ENCODE measurements at regions of chr6 and their contacts with region 1.

Region 1: DNA sequence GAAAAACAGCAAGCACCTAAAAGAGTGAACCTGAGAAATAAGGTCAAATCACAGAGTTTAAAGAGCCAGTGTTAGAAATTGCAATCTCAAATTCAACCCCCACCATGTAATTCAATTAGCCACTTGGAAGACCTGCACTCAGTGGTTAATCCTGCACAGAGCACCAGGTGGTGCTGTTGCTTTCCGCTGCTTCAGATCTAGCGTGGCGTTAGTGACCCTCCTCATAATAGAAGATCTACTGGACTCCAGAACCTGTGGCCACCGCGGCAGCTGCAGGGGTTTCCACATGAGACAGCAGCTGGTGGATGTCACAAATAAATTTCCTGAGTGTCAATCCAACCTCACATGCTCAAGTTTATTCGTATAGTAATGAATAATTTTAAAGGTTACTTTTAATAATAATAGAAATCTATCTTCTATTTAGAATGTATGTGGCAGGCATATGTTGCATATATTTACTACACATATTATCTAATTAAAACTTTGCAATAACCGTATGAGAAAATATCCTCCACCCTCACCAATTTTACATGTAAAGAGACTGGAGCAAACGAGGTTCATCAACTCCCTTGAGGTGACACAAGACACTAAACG is 84.4 kb downstream of the SYNE1 start:
- DNase-seq: peak; percentile 88
- H3K4me3 ChIP-seq: no peak overlapping the region
- H3K27ac ChIP-seq: no peak overlapping the region
- H3K4me1 ChIP-seq: no peaks in the 10 kb centered on the region
- H3K27me3 ChIP-seq: no peaks in the 10 kb centered on the region
- CTCF ChIP-seq: peak; percentile 78 to 83
- POLR2A ChIP-seq: no peak

Region 2: GRCh38 chr6:152484806-152485205 is 67.9 kb before region 1 on chr6:
- CTCF ChIA-PET with region 1: interaction called, 11 read pairs
- POLR2A ChIA-PET with region 1: no interaction called
- dilution Hi-C with region 1: no loop called
- intact Hi-C with region 1: loop called (anchors 1 kb)
- DNase-seq: peak; percentile 92
- H3K4me3 ChIP-seq: no peak overlapping the region
- H3K27ac ChIP-seq: no peak overlapping the region
- H3K4me1 ChIP-seq: peaks cover 14% of the 10 kb centered on the region
- H3K27me3 ChIP-seq: no peaks in the 10 kb centered on the region
- CTCF ChIP-seq: no peak
- POLR2A ChIP-seq: no peak

Region 3: GRCh38 chr6:152642989-152643388 is 90.3 kb after region 1 on chr6:
- CTCF ChIA-PET with region 1: interaction called, 18 read pairs
- POLR2A ChIA-PET with region 1: no interaction called
- dilution Hi-C with region 1: no loop called
- intact Hi-C with region 1: loop called (anchors 1 kb)
- DNase-seq: peak; percentile 59
- H3K4me3 ChIP-seq: no peak overlapping the region
- H3K27ac ChIP-seq: no peak overlapping the region
- H3K4me1 ChIP-seq: no peaks in the 10 kb centered on the region
- H3K27me3 ChIP-seq: peaks cover 0 to under 1% of the 10 kb centered on the region in 2 experiments
- CTCF ChIP-seq: peak; percentile 32 to 71
- POLR2A ChIP-seq: no peak

Region 4: GRCh38 chr6:152701081-152701862 is 148.6 kb after region 1 on chr6:
- CTCF ChIA-PET with region 1: interaction called, 13 read pairs
- POLR2A ChIA-PET with region 1: interaction called, 3 read pairs
- dilution Hi-C with region 1: no loop called
- intact Hi-C with region 1: loop called (anchors 1 kb)
- DNase-seq: peak; percentile 59
- H3K4me3 ChIP-seq: peak overlapping the region; percentile 57 to 97 (median 88)
- H3K27ac ChIP-seq: peak overlapping the region; percentile 92
- H3K4me1 ChIP-seq: peaks cover 42% of the 10 kb centered on the region
- H3K27me3 ChIP-seq: no peaks in the 10 kb centered on the region
- CTCF ChIP-seq: peak in 1 of 2 donors; percentile 3
- POLR2A ChIP-seq: no peak

Region 5: GRCh38 chr6:152863618-152864326 is 311.1 kb after region 1 on chr6:
- CTCF ChIA-PET with region 1: no interaction called
- POLR2A ChIA-PET with region 1: no interaction called
- dilution Hi-C with region 1: no loop called
- intact Hi-C with region 1: loop called (anchors 5 kb)
- DNase-seq: peak; percentile 78
- H3K4me3 ChIP-seq: no peak overlapping the region
- H3K27ac ChIP-seq: no peak overlapping the region
- H3K4me1 ChIP-seq: no peaks in the 10 kb centered on the region
- H3K27me3 ChIP-seq: no peaks in the 10 kb centered on the region
- CTCF ChIP-seq: peak; percentile 48 to 54
- POLR2A ChIP-seq: no peak

Region 6: DNA sequence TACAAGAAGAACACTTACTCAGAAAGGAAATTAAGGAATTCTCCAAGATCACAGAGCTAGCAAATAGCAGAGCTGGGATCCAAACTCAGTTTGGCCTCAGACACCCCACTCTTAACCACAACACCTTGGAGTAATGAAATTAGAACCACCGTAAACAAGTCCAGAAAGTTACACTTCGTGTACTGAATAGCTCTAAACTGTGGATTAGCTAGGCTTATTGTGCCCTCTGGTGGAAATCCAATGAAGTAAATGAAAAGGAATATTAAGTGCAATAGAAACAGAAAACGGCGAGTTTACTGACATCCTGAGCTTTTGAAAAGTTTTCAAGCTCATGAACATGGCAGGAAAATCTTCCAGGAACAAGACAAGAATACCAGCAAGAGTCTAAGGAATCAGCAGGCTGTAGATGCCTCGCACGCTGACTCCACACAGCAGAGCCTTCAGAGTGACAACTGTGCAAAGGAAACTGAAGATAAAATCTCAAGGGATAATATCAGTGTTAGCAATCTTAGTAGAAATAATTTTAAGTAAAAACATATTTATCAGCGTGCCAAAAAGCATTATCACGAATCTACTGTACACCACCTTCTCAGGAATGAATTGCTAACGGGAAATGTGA is 395.5 kb after region 1 on chr6:
- CTCF ChIA-PET with region 1: interaction called, 16 read pairs
- POLR2A ChIA-PET with region 1: no interaction called
- dilution Hi-C with region 1: no loop called
- intact Hi-C with region 1: loop called (anchors 1 kb)
- DNase-seq: peak; percentile 64
- H3K4me3 ChIP-seq: no peak overlapping the region
- H3K27ac ChIP-seq: no peak overlapping the region
- H3K4me1 ChIP-seq: peaks cover 11% of the 10 kb centered on the region
- H3K27me3 ChIP-seq: no peaks in the 10 kb centered on the region
- CTCF ChIP-seq: peak; percentile 41 to 46
- POLR2A ChIP-seq: no peak